ENCODE measurements at regions of chr19 and their contacts with region 1.

Region 1: DNA sequence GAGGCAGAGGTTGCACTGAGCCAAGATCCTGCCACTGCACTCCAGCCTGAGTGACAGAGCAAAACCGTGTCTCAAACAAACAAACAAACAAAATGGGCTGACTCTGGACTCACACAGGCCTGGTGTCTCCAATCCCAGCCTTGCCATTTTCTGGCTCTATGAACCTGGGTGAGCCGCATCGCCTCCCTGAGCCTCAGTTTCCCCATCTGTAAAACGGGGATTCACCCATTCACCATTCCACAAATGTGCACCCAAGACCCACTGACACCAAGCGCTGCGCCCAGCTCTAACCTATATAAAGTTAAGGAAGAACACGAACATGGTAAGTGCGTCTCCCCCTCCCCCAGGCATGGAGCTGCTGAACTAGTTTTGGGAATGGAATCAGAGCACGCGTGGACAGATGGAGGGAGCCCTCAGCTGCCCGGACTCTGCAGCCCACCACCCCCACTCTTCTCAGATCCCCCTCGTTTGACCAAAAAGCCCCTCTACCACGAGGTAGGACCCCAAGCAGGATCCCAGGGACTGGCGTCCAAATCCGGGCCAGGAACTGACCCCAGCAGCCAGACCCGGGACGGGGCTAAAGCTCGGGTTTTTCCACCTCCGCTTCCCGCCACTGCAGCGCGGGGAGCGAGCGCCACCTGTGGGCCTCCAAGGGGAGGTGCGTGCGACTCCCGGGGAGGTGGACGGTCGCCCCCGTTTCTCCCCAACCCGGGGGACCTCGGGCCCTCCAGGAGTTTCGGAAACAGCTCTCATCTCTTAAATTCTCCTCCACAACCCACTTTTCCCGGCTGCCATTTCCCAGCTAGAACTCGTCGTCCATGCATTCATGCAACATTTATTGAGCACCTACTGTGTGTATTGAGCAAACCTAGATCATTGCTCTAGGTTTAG is 33.0 kb upstream of the ADGRE5 start:
- DNase-seq: peak; percentile 62
- H3K4me3 ChIP-seq: peak overlapping the region; percentile 47
- H3K27ac ChIP-seq: no peak overlapping the region
- H3K4me1 ChIP-seq: peaks cover 8% of the 10 kb centered on the region
- H3K27me3 ChIP-seq: peaks cover 20% of the 10 kb centered on the region
- CTCF ChIP-seq: peak; percentile 98

Region 2: GRCh38 chr19:14198384-14199376 is 149.6 kb before region 1 on chr19:
- intact Hi-C with region 1: loop called (anchors 5 kb)
- DNase-seq: no peak
- H3K4me3 ChIP-seq: no peak overlapping the region
- H3K27ac ChIP-seq: no peak overlapping the region
- H3K4me1 ChIP-seq: no peaks in the 10 kb centered on the region
- H3K27me3 ChIP-seq: no peaks in the 10 kb centered on the region
- CTCF ChIP-seq: no peak

Measured in left ventricle myocardium inferior (tissue), 1 donor.